CD8-positive, alpha-beta T cell (primary cell): ENCODE measurements at regions of chr12 and their contacts with region 1.

Region 1: DNA sequence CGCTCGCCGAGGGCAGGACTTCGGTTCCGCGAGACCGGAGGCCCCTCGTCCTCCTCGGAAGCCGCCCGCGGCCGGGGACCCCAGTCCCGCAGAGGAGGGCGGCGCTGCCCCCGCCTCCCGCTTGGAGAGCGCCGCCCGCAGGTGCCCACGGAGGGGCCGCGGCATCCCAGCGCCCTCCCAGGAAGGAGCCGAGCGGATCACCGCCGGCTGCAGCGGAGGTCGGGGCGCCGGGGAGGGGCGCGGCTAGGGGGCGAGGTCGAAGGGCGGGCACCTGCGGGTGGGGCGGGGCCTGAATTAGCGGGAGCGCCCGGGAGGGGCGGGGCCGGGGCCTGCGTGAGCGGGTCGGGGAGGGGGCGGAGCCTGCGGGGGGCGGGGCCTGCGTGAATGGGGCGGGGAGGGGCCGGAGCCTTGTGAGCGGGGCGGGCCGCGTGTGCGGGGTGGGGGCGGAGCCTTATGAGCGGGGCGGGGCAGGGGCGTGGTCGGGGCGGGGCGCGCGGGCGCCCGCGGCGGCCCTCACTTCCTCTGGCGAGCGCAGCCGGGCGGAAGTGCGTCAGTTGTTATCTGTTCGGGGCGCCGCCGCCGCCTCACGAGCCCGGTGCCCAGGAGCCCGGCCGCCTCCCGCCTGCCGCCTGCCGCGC is at the start of gene FBRSL1:
- DNase-seq: peak; percentile 85 to 97 (median 94)
- ATAC-seq: peak; percentile 77
- H3K4me3 ChIP-seq: peak within 1 kb of the TSS; percentile 61 to 95
- H3K4me3 Mint-ChIP-seq: peak within 1 kb of the TSS; percentile 89
- H3K27ac ChIP-seq: peak within 1 kb of the TSS; percentile 85 to 87
- H3K27ac Mint-ChIP-seq: peak within 1 kb of the TSS; percentile 96
- H3K4me1 ChIP-seq: peaks cover 66% of the 10 kb centered on the region
- H3K4me1 Mint-ChIP-seq: peaks cover 69% of the 10 kb centered on the region
- H3K27me3 ChIP-seq: no peaks in the 10 kb centered on the region
- H3K27me3 Mint-ChIP-seq: no peaks in the 10 kb centered on the region
- CTCF ChIP-seq: no peak
- total RNA-seq, gene FBRSL1: 78.5 to 82.0 TPM

Region 2: DNA sequence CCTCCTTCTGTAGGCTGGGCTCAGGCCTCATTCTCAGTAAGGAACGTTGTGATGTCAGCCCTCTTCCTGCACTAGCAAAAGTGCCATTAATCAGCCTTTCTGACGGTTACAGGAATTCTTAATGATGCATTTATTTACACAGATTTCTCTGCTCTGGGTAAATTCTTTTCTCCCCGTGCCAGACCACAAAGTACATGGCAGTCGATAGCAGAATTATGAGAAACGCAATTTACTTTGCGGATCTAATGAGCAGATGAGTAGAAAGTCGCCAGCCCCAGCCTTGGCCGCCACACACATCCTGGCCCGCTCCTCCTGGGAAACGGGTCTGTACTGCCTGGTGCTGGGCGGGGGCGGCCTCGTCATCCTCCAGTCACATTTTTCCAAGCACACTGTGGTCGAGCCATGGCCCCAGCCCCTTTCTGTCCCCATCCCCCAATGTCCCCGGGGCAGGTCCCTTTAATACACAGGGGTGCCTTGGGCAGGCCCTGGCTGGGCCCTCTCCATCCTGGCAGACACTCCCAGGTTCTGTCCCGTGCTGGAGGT is 319.6 kb before region 1 on chr12:
- CTCF ChIA-PET with region 1: no interaction called
- POLR2A ChIA-PET with region 1: no interaction called
- intact Hi-C with region 1: no loop called
- DNase-seq: no peak
- ATAC-seq: no peak
- H3K4me3 ChIP-seq: no peak overlapping the region
- H3K4me3 Mint-ChIP-seq: no peak overlapping the region
- H3K27ac ChIP-seq: no peak overlapping the region
- H3K27ac Mint-ChIP-seq: no peak overlapping the region
- H3K4me1 ChIP-seq: peaks cover 18% of the 10 kb centered on the region
- H3K4me1 Mint-ChIP-seq: peaks cover 13% of the 10 kb centered on the region
- H3K27me3 ChIP-seq: peaks cover 4% of the 10 kb centered on the region in 2 experiments
- H3K27me3 Mint-ChIP-seq: peaks cover 5% of the 10 kb centered on the region
- CTCF ChIP-seq: no peak

Region 3: DNA sequence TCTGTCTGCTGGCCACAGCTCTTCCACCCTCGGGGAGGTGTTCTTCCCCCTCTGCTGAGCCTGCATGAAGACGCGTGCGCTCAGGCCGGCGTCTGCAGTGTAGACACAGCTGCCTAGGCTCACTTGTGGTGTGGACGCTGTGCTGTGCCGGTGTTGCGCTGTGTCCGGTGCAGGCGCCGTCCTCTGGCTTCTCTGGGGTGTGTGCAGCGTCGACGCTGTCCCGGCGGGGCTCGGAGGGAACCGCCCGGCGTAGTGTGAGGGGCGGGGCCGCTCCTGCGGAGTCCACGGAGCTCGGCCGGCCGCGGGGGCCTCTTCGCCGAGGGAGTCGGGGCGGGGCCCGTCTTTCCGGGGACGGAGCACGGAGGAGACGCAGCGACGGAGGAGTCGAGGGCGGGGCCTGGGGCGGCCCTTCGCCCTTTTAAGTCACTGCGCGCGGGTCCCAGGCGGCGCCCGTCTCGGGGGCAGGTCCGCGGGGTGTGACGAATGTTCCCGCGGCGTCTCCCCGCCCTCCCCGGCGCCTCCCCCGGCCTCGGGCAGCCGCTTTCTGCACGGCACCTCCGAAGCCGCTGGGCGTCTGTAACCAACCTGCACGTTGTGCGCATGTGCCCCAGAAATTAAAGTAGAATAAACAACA is 300.2 kb before region 1 on chr12:
- CTCF ChIA-PET with region 1: no interaction called
- POLR2A ChIA-PET with region 1: interaction called, 5 read pairs
- intact Hi-C with region 1: loop called (anchors 1 to 5 kb)
- DNase-seq: peak; percentile 88 to 97 (median 93)
- ATAC-seq: peak; percentile 88
- H3K4me3 ChIP-seq: peak overlapping the region; percentile 71 to 94
- H3K4me3 Mint-ChIP-seq: peak overlapping the region; percentile 94
- H3K27ac ChIP-seq: peak overlapping the region; percentile 80 to 81
- H3K27ac Mint-ChIP-seq: peak overlapping the region; percentile 96
- H3K4me1 ChIP-seq: peaks cover 47% of the 10 kb centered on the region
- H3K4me1 Mint-ChIP-seq: peaks cover 50% of the 10 kb centered on the region
- H3K27me3 ChIP-seq: no peaks in the 10 kb centered on the region
- H3K27me3 Mint-ChIP-seq: no peaks in the 10 kb centered on the region
- CTCF ChIP-seq: no peak

Region 4: GRCh38 chr12:132437252-132437932 is 52.3 kb before region 1 on chr12:
- CTCF ChIA-PET with region 1: interaction called, 3 read pairs
- POLR2A ChIA-PET with region 1: interaction called, 11 read pairs
- intact Hi-C with region 1: no loop called
- DNase-seq: no peak
- ATAC-seq: peak; percentile 29
- H3K4me3 ChIP-seq: peak overlapping the region in 1 of 2 experiments; percentile 44
- H3K4me3 Mint-ChIP-seq: peak overlapping the region; percentile 49
- H3K27ac ChIP-seq: peak overlapping the region in 1 of 2 experiments; percentile 5
- H3K27ac Mint-ChIP-seq: peak overlapping the region; percentile 55
- H3K4me1 ChIP-seq: peaks cover 67% of the 10 kb centered on the region
- H3K4me1 Mint-ChIP-seq: peaks cover 45% of the 10 kb centered on the region
- H3K27me3 ChIP-seq: no peaks in the 10 kb centered on the region
- H3K27me3 Mint-ChIP-seq: peaks cover 5% of the 10 kb centered on the region
- CTCF ChIP-seq: no peak

Region 5: DNA sequence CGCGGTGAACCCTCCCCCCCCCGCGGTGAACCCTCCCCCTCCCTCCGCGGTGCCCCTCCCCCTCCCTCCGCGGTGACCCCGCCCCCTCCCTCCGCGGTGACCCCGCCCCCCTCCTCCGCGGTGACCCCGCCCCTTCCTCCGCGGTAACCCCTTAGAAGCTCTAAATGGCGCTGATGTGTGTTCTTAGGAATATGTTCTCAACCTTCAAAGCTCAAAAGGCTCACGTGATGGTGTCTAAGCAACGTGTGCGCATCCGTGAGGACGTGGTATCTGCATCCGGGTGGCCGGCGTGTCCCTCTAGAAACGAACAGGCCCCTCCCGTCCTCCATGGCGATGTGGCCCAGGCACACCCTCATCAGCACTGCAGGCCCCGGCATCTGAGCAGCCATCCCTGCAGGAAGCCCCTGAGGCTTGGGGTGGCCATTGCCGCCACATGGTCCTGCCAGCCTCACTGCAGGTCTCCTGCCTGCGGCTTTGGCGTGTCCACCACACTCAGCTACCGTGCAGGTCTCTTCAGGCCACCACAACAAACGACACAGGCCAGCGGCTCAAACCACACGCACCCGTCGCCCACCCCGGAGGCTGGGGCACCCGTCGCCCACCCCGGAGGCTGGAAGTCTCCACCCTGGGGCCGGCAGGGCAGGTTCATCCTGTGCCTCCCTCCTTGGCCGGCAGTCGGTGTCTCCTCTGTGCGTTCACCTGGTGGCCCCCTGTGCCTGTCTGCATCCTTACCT is 14.2 kb before region 1 on chr12:
- CTCF ChIA-PET with region 1: interaction called, 3 read pairs
- POLR2A ChIA-PET with region 1: interaction called, 25 read pairs
- intact Hi-C with region 1: loop called (anchors 1 kb)
- DNase-seq: peak in 3 of 9 experiments; percentile 53 to 75 (median 64)
- ATAC-seq: peak; percentile 61
- H3K4me3 ChIP-seq: peak overlapping the region; percentile 7 to 27
- H3K4me3 Mint-ChIP-seq: peak overlapping the region; percentile 39
- H3K27ac ChIP-seq: no peak overlapping the region
- H3K27ac Mint-ChIP-seq: peak overlapping the region; percentile 73
- H3K4me1 ChIP-seq: peaks cover 20% of the 10 kb centered on the region
- H3K4me1 Mint-ChIP-seq: peaks cover 36% of the 10 kb centered on the region
- H3K27me3 ChIP-seq: no peaks in the 10 kb centered on the region
- H3K27me3 Mint-ChIP-seq: no peaks in the 10 kb centered on the region
- CTCF ChIP-seq: no peak

Region 6: DNA sequence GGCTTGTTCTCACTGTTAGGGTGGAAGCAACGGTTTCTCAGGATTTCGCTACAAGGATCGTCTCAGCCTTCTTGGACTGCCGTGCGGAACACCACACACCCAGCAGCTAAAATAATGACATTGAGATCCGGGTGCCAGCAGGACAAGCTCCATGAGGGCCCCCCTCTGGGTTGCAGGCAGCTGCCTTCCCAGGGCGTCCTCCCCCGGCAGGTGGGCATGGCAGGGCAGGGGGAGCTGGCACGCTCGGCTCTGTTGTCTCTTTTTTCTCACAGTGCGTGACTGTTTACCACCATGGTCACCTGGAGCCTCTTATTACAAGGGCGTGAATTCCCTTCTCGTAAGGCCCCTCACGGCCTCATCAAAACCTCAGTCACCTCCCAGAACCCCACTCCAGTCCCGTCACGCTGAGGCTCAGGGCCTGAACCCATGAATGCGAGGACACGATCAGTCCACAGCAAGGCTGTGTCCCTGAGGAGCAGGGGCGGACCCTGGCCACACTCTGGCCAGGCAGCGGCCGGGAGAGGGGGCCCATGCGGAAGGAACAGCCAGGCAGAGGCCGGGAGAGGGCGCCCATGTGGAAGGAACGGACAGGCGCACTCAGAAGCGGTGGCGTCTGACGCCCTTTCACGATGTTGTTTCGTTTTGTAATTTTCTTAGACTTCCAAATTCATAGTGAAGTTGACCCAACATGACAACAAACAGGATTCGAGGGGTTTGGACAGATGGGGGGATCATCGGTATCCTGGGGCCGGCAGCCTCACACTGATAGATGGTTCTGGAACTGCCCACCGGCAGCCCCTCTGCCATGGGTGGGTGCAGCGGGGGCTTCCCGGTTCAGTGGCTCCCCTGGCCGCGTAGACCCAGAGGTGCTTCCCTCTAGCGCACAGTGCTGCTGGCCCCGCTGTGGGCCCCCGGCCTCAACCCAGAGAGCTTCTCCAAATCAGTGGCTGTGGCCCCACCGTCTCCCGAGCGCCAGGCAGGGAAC is 110.6 kb after region 1 on chr12:
- CTCF ChIA-PET with region 1: no interaction called
- POLR2A ChIA-PET with region 1: no interaction called
- intact Hi-C with region 1: loop called in 1 of 2 experiments (anchors 5 kb)
- DNase-seq: peak in 6 of 9 experiments; percentile 24 to 62 (median 48)
- ATAC-seq: peak; percentile 39
- H3K4me3 ChIP-seq: peak overlapping the region; percentile 52 to 61
- H3K4me3 Mint-ChIP-seq: peak overlapping the region; percentile 80
- H3K27ac ChIP-seq: no peak overlapping the region
- H3K27ac Mint-ChIP-seq: peak overlapping the region; percentile 13
- H3K4me1 ChIP-seq: peaks cover 16% of the 10 kb centered on the region
- H3K4me1 Mint-ChIP-seq: peaks cover 18% of the 10 kb centered on the region
- H3K27me3 ChIP-seq: peaks cover 0 to 10% of the 10 kb centered on the region in 2 experiments
- H3K27me3 Mint-ChIP-seq: peaks cover 39% of the 10 kb centered on the region
- CTCF ChIP-seq: peak; percentile 34